ENCODE measurements at regions of chr6 and their contacts with region 1.

Region 1: GRCh38 chr6:31203345-31203979 is 33.0 kb upstream of the POU5F1 start:
- DNase-seq: peak; percentile 52 to 98
- H3K4me3 ChIP-seq: peak overlapping the region; percentile 52; the same call in 1 of the 2 replicates
- H3K27ac ChIP-seq: peak overlapping the region; percentile 95
- H3K4me1 ChIP-seq: peaks cover 40% of the 10 kb centered on the region
- H3K27me3 ChIP-seq: no peaks in the 10 kb centered on the region
- CTCF ChIP-seq: no peak

Region 2: DNA sequence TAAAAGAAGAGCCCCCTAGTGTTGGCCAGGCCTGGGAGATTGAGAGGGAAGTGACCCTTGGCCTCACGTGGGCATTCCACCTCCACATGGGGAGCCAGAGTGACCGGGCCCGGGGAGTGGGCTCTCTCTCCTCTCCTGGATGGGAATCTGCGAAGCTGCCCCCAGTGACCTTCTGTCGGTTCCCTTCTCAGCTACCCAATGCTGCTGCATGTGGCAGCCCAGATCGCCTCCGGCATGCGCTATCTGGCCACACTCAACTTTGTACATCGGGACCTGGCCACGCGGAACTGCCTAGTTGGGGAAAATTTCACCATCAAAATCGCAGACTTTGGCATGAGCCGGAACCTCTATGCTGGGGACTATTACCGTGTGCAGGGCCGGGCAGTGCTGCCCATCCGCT is 305.6 kb before region 1 on chr6:
- CTCF ChIA-PET with region 1: interaction called, 10 read pairs
- POLR2A ChIA-PET with region 1: no interaction called
- intact Hi-C with region 1: no loop called
- DNase-seq: no peak
- H3K4me3 ChIP-seq: no peak overlapping the region
- H3K27ac ChIP-seq: no peak overlapping the region
- H3K4me1 ChIP-seq: no peaks in the 10 kb centered on the region
- H3K27me3 ChIP-seq: no peaks in the 10 kb centered on the region
- CTCF ChIP-seq: no peak

Region 3: GRCh38 chr6:31271641-31272357 is 68.3 kb after region 1 on chr6 and contains the start of gene HLA-C:
- CTCF ChIA-PET with region 1: no interaction called
- POLR2A ChIA-PET with region 1: no interaction called
- intact Hi-C with region 1: loop called (anchors 2 kb)
- DNase-seq: peak; percentile 86 to 88
- H3K4me3 ChIP-seq: peak within 1 kb of the TSS; percentile 67
- H3K27ac ChIP-seq: peak within 1 kb of the TSS; percentile 32; the same call in 1 of the 2 replicates
- H3K4me1 ChIP-seq: 0 out of 2 replicates have a peak, but pooled peaks cover 3% of the 10 kb centered on the region
- H3K27me3 ChIP-seq: peaks cover 7% of the 10 kb centered on the region
- CTCF ChIP-seq: no peak
- total RNA-seq, gene HLA-C: 305 and 374 TPM in 2 replicates